PC-9 (cell line): ENCODE measurements at regions of chr12 and their contacts with region 1.

Region 1: DNA sequence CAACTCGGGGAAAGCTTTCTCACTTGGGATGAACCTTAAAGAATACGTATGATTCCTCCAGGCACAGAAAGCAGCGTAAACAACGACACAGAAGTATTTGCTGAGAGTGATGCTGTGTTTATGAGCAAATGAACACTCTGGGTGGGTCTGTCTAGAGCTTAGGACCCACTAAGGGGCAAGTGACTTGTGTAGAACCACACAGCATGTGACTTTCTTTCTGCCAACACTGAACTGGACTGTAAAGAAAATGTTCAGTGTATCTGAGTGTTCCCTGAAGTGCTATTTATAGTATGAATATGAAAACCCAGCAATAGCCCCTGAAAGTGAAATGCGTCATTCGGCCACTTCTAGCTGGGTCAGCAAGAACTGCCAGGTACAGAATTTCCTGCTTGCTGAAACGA is 78.5 kb downstream of the ST8SIA1 start:
- DNase-seq: no peak
- H3K4me3 ChIP-seq: no peak overlapping the region
- H3K27ac ChIP-seq: no peak overlapping the region
- H3K4me1 ChIP-seq: no peaks in the 10 kb centered on the region
- H3K27me3 ChIP-seq: no peaks in the 10 kb centered on the region
- CTCF ChIP-seq: no peak

Region 2: DNA sequence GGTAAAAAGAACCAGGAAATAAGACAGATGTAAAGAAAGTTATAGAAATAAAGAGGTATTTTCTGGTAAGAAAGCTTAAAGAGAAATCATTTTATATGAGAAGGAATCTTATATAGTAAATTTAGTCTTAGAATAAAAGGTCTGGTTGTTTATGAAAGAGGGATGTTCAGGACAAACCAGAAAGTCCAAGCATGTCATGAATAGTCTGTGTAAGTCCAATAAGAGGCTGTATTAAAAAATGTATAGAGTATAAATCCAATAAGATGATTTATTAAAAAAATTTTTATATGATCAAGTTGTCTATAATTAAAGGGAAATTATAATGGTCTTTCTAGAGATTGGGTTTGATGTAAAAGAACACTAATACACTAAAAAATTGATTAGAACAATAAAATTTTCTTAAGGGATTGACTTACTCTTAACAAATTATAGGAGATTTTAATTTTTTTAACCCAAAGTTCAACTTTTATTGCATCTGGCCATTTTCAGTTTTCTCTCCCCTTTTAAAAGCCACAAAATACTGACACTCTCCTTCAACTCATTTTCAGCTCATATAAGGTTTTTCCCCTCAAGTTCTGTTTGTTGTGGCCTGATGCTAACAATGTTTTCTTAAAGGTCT is 43.4 kb after region 1 on chr12:
- CTCF ChIA-PET with region 1: no interaction called
- POLR2A ChIA-PET with region 1: no interaction called
- intact Hi-C with region 1: loop called (anchors 2 kb)
- DNase-seq: no peak
- H3K4me3 ChIP-seq: no peak overlapping the region
- H3K27ac ChIP-seq: no peak overlapping the region
- H3K4me1 ChIP-seq: no peaks in the 10 kb centered on the region
- H3K27me3 ChIP-seq: no peaks in the 10 kb centered on the region
- CTCF ChIP-seq: no peak

Region 3: DNA sequence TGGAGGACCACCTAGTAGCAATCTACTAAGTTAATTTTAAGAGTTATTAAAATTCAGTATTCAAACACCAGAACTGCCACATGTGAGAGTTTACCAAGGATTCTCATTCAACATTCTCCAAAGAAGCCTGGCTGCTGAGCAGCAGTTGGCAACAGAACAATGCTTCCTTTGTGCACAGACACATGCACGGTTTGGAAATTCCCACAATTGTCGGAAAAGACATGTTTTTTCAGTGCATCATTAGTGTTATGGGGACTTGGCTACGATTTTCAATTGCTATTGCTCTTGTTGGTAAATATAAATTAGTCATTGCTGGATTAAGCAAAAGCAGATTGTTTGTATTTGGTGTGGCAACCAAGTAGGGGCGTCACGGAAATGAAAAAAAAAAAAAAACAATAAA is 56.3 kb after region 1 on chr12:
- CTCF ChIA-PET with region 1: no interaction called
- POLR2A ChIA-PET with region 1: no interaction called
- intact Hi-C with region 1: no loop called
- DNase-seq: peak in 1 of 2 experiments; percentile 37
- H3K4me3 ChIP-seq: no peak overlapping the region
- H3K27ac ChIP-seq: no peak overlapping the region
- H3K4me1 ChIP-seq: 0 out of 2 replicates have a peak, but pooled peaks cover 5% of the 10 kb centered on the region
- H3K27me3 ChIP-seq: no peaks in the 10 kb centered on the region
- CTCF ChIP-seq: no peak